Dendritic cell treated with granulocyte-macrophage colony-stimulating factor and Interleukin-4, amounts not matched to agents 40 ng/mL and 50 ng/mL, for 4 days (primary cell): ENCODE measurements at regions of chr4 and their contacts with region 1.

Region 1: GRCh38 chr4:86895692-86896488 is 3.7 kb upstream of the C4orf36 start:
- H3K4me3 Mint-ChIP-seq: no peak overlapping the region
- H3K27ac Mint-ChIP-seq: no peak overlapping the region
- H3K4me1 Mint-ChIP-seq: peaks cover 16% of the 10 kb centered on the region
- H3K27me3 Mint-ChIP-seq: peaks cover 19% of the 10 kb centered on the region

Region 2: GRCh38 chr4:86359944-86360478 is 535.9 kb before region 1 on chr4 and contains the start of gene MAPK10:
- intact Hi-C with region 1: loop called (anchors 5 kb)
- H3K4me3 Mint-ChIP-seq: peak within 1 kb of the TSS; percentile 53
- H3K27ac Mint-ChIP-seq: peak within 1 kb of the TSS; percentile 0
- H3K4me1 Mint-ChIP-seq: peaks cover 12% of the 10 kb centered on the region
- H3K27me3 Mint-ChIP-seq: no peaks in the 10 kb centered on the region

Region 3: GRCh38 chr4:86496094-86497076 is 399.5 kb before region 1 on chr4:
- intact Hi-C with region 1: loop called (anchors 1 kb)
- H3K4me3 Mint-ChIP-seq: no peak overlapping the region
- H3K27ac Mint-ChIP-seq: no peak overlapping the region
- H3K4me1 Mint-ChIP-seq: peaks cover 13% of the 10 kb centered on the region
- H3K27me3 Mint-ChIP-seq: no peaks in the 10 kb centered on the region

Region 4: DNA sequence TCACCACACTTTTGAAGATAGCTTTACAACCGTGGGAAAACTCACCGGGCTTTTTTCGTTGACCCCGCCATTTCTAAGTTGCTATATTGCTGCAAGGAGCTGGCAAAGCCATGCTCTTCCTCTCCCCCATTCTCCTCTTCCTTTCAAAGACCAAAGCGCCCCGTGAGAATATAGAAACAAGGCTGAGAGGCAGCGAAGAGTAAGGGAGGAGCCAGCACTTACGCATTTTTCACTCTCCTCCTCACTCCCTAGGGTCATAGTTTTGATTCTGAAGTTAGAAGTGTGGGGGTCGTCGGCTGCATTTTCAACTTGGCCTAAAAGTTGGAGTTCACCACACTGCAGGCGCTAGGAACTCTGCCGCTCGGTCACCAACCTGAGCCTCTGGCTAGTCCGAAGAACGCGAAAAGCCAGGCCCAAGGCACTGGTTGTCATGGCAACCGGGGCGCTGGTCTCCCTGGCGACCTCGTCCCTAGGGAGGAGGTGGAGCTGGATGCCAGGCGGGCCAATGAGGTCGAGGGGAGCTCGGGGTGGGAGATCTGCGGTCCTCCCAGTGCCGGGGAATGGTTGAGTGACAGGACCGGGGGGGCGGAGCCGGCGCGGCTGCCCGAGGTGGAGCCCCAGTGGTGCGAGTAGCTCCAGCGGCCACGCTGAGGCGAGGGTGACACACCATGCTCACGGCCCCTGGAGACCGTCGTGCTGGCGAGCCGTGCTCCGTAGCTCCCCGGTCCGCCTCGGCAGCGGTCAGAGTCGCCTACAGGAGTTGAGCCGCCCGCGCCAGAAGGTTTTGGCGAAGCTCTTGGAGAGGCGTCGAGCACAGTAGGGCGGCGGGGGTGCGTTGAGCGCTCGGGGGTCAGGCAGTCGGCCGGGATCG is 302.0 kb before region 1 on chr4 and contains the start of gene PTPN13:
- intact Hi-C with region 1: loop called (anchors 5 kb)
- H3K4me3 Mint-ChIP-seq: peak within 1 kb of the TSS; percentile 76
- H3K27ac Mint-ChIP-seq: peak within 1 kb of the TSS; percentile 23
- H3K4me1 Mint-ChIP-seq: peaks cover 20% of the 10 kb centered on the region
- H3K27me3 Mint-ChIP-seq: peaks cover 42% of the 10 kb centered on the region

Region 5: GRCh38 chr4:86878640-86879039 is 17.2 kb before region 1 on chr4:
- intact Hi-C with region 1: no loop called
- H3K4me3 Mint-ChIP-seq: no peak overlapping the region
- H3K27ac Mint-ChIP-seq: no peak overlapping the region
- H3K4me1 Mint-ChIP-seq: no peaks in the 10 kb centered on the region
- H3K27me3 Mint-ChIP-seq: no peaks in the 10 kb centered on the region

Region 6: GRCh38 chr4:86948276-86948675 is 52.4 kb after region 1 on chr4:
- intact Hi-C with region 1: no loop called
- H3K4me3 Mint-ChIP-seq: no peak overlapping the region
- H3K27ac Mint-ChIP-seq: no peak overlapping the region
- H3K4me1 Mint-ChIP-seq: peaks cover 50% of the 10 kb centered on the region
- H3K27me3 Mint-ChIP-seq: no peaks in the 10 kb centered on the region

Region 7: DNA sequence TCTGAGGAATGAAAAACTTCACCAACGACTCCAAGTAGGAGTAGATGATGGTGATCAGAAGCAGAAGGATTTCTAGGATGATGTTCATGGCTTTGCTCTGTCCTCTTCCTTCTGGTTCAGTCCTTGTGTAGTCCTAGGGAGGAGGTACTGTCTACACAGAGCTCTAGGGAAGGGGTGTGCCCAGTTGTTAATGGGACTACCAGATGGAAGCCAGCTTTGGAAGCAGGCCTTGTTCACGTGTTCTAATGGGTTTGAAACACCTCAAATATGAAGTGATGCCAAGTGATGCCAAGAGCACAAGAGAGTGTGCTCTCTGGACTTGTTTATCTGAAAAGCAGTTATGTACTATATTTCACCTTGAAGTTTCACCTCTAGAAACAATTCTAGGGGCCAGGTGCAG is 426.9 kb after region 1 on chr4 and contains the start of gene HSD17B13:
- intact Hi-C with region 1: no loop called
- H3K4me3 Mint-ChIP-seq: no peak within 1 kb of the TSS
- H3K27ac Mint-ChIP-seq: no peak within 1 kb of the TSS
- H3K4me1 Mint-ChIP-seq: peaks cover 9% of the 10 kb centered on the region
- H3K27me3 Mint-ChIP-seq: no peaks in the 10 kb centered on the region